A549 (cell line): ENCODE measurements at regions of chr4 and their contacts with region 1.

Region 1: GRCh38 chr4:25694466-25694865 is 38.8 kb downstream of the SLC34A2 start:
- DNase-seq: peak; percentile 8 to 47
- ATAC-seq: peak; percentile 34 to 54; a peak in 3 of 6 replicates
- H3K4me3 ChIP-seq: no peak overlapping the region
- H3K27ac ChIP-seq: peak overlapping the region in 1 of 2 experiments; percentile 15; a peak in 1 of 6 replicates
- H3K4me1 ChIP-seq: peaks cover 13% of the 10 kb centered on the region; the same call in 1 of the 3 replicates
- CTCF ChIP-seq: no peak
- EP300 ChIP-seq: no peak
- POLR2A ChIP-seq: no peak
- RAD21 ChIP-seq: no peak

Region 2: DNA sequence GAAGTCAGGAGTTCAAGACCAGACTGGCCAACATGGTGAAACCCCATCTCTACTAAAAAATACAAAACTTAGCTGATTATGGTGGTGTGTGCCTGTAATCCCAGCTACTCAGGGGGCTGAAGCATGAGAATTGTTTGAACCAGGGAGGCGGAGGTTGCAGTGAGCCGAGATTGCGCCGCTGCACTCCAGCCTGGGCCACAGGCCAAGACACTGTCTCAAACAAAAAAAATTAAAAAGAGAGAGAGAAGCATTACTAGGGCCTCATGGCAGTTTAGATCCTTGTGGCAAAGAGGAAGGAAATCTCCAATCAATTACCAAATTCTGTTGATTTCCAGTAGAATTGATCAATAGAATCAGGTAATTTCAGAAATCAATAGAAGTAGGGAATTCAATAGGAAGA is 55.7 kb before region 1 on chr4:
- CTCF ChIA-PET with region 1: no interaction called
- POLR2A ChIA-PET with region 1: interaction called, 11 read pairs
- DNase-seq: no peak
- ATAC-seq: no peak
- H3K4me3 ChIP-seq: no peak overlapping the region
- H3K27ac ChIP-seq: no peak overlapping the region
- H3K4me1 ChIP-seq: no peaks in the 10 kb centered on the region
- CTCF ChIP-seq: no peak
- EP300 ChIP-seq: no peak
- POLR2A ChIP-seq: no peak
- RAD21 ChIP-seq: no peak